Right lobe of liver (tissue), 6 donors: ENCODE measurements at regions of chr18 and their contacts with region 1.

Region 1: DNA sequence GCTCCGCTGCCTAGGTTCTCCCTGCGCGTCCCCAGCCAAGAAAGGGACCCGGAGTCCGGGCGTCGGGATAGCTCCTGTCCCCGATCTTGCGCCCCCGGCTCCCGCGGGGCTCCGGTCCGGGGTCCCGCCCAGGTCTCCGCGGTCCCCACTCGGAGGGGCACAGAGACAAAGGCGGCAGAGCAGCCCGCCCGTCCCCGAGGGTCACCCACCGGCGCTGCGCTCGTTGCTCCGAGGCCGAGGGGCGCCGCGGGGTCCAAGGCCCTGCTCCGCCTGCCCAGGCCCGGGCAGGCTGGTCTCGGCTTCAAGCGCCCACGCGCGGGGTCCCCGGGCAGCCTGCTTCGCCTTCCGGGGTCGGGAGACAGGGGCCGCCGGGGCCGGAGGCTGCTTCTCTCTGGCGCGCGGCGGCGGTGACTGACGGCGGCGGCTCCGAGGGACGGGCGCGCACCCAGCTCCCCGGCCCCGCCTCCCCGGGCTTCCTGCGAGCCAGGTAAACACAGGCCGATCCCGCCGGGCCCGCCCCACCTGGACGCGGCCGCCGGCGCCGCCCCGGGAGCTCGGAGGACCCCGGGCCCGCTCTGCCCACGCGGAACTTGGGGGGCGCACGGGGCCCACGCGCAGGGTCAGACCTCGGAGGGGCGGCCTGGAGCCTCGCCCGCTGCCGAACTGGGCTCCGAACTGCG is at the start of gene MBP:
- DNase-seq: peak; percentile 91 to 92 (median 91)
- ATAC-seq: peak; percentile 65 to 86 (median 80)
- H3K4me3 ChIP-seq: peak within 1 kb of the TSS; percentile 79 to 96 (median 92)
- H3K27ac ChIP-seq: peak within 1 kb of the TSS; percentile 97 to 99 (median 98)
- H3K4me1 ChIP-seq: peaks cover 0 to 24% (median under 1%) of the 10 kb centered on the region in 4 donors
- H3K27me3 ChIP-seq: no peaks in the 10 kb centered on the region
- CTCF ChIP-seq: no peak
- POLR2A ChIP-seq: peak; percentile 96
- total RNA-seq, gene MBP: 24.0 to 40.8 (median 27.6) TPM

Region 2: GRCh38 chr18:77054606-77055428 is 77.7 kb before region 1 on chr18:
- intact Hi-C with region 1: loop called in 1 of 2 experiments (anchors 10 kb)
- DNase-seq: peak; percentile 77 to 88 (median 85)
- ATAC-seq: peak; percentile 69 to 83 (median 78)
- H3K4me3 ChIP-seq: no peak overlapping the region
- H3K27ac ChIP-seq: peak overlapping the region; percentile 70 to 94 (median 92)
- H3K4me1 ChIP-seq: peaks cover 0 to 38% (median 21%) of the 10 kb centered on the region in 4 donors
- H3K27me3 ChIP-seq: no peaks in the 10 kb centered on the region
- CTCF ChIP-seq: peak; percentile 40 to 47 (median 44)
- POLR2A ChIP-seq: peak; percentile 17

Region 3: GRCh38 chr18:77316641-77317040 is 184.1 kb after region 1 on chr18:
- intact Hi-C with region 1: no loop called
- DNase-seq: no peak
- ATAC-seq: no peak
- H3K4me3 ChIP-seq: no peak overlapping the region
- H3K27ac ChIP-seq: no peak overlapping the region
- H3K4me1 ChIP-seq: no peaks in the 10 kb centered on the region
- H3K27me3 ChIP-seq: no peaks in the 10 kb centered on the region
- CTCF ChIP-seq: no peak
- POLR2A ChIP-seq: no peak